ENCODE measurements at regions of chr1 and their contacts with region 1.

Region 1: GRCh38 chr1:25997828-25998761 is at the start of gene PAFAH2:
- DNase-seq: peak; percentile 98
- H3K4me3 Mint-ChIP-seq: peak within 1 kb of the TSS; percentile 96
- H3K27ac Mint-ChIP-seq: peak within 1 kb of the TSS; percentile 96
- H3K4me1 Mint-ChIP-seq: peaks cover 19% of the 10 kb centered on the region
- H3K27me3 Mint-ChIP-seq: no peaks in the 10 kb centered on the region
- total RNA-seq, gene PAFAH2: 5.9 to 7.3 TPM

Region 2: DNA sequence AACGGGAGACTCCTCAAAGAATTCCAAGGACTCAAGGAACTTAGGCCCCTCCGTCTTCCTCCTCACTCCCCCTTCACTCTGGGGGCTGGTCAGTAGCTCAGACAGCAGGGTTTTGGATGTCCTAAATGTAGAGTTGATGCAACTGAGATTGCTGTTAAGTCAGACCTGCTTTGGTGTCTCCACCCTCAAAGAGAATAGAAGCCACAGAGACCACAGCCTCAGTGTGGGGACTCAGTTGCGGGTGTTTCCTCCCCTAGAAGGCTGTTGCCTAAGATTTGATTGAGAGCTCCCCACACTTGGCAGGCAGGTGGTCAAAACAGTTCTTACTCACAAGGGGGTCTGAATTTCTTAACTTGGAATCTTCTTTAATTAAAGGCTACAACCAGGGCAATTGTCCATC is 373.9 kb before region 1 on chr1:
- CTCF ChIA-PET with region 1: no interaction called
- POLR2A ChIA-PET with region 1: no interaction called
- intact Hi-C with region 1: loop called (anchors 10 kb)
- DNase-seq: peak; percentile 55
- H3K4me3 Mint-ChIP-seq: no peak overlapping the region
- H3K27ac Mint-ChIP-seq: no peak overlapping the region
- H3K4me1 Mint-ChIP-seq: peaks cover 65% of the 10 kb centered on the region
- H3K27me3 Mint-ChIP-seq: peaks cover 4% of the 10 kb centered on the region

Region 3: GRCh38 chr1:25819576-25820246 is 178.4 kb before region 1 on chr1 and contains the start of gene MTFR1L:
- CTCF ChIA-PET with region 1: interaction called, 7 read pairs
- POLR2A ChIA-PET with region 1: interaction called, 5 read pairs
- intact Hi-C with region 1: loop called (anchors 1 kb)
- DNase-seq: peak; percentile 97
- H3K4me3 Mint-ChIP-seq: peak within 1 kb of the TSS; percentile 95
- H3K27ac Mint-ChIP-seq: peak within 1 kb of the TSS; percentile 89
- H3K4me1 Mint-ChIP-seq: peaks cover 33% of the 10 kb centered on the region
- H3K27me3 Mint-ChIP-seq: no peaks in the 10 kb centered on the region
- total RNA-seq, gene MTFR1L: 28.0 to 31.1 TPM

Region 4: DNA sequence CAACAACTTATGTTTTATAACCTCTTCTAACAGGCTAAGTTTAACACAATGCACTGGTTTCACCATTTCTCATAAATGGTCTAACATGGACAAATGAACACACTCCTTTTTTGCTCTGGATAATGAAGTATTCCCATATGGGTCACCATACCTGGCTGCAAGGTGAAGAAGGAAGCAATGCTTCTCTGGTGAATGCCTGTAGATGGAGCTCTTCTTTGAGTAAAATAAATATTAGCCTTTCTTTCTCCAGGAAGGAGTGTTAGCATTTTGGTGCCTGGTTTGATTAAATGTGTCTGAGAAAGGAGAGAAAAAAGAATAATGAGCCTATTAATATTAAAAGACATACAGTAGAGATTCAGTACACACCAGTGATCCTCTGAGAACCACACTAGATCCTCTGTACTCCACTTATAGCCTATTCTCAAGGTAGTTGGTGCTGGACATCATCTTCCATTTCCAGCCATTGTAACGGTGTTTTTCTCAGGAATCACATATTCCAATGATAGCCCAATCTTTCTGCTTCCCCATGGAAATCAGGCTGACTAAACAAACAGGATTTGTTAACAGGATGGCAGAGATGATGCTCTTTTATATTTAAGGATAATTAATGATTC is 160.7 kb before region 1 on chr1:
- CTCF ChIA-PET with region 1: no interaction called
- POLR2A ChIA-PET with region 1: no interaction called
- intact Hi-C with region 1: no loop called
- DNase-seq: no peak
- H3K4me3 Mint-ChIP-seq: no peak overlapping the region
- H3K27ac Mint-ChIP-seq: no peak overlapping the region
- H3K4me1 Mint-ChIP-seq: no peaks in the 10 kb centered on the region
- H3K27me3 Mint-ChIP-seq: no peaks in the 10 kb centered on the region

Region 5: DNA sequence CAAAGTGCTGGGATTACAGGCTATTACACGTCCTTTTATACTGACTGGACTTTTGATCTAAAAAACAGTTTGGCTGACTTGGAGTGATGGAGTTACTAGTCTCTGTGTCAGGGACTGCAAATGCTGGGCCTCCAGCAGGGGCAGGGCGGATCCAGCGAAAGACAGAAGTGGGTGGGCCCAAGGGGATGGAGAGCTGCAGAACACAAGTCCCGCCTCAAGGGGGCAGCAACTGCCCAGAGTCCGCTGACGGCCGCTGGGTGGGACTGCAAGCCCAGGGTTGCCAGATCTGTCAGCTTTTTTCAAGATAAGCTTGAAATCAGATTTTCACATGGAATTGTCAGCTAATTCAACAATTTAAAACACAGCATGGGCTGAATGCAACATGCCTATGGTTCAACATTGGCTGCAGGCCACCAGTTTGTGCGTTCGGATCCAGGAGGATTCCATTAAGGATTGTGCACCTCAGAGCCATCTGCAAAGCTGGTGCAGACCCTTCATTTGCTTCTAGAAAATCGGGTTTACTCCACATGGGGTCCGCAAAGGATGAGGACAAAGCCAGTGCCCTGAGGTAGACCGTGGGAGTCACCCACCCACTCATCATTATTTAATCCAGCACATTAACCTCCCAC is 102.6 kb before region 1 on chr1:
- CTCF ChIA-PET with region 1: interaction called, 260 read pairs
- POLR2A ChIA-PET with region 1: interaction called, 20 read pairs
- intact Hi-C with region 1: loop called (anchors 1 kb)
- DNase-seq: peak; percentile 93
- H3K4me3 Mint-ChIP-seq: no peak overlapping the region
- H3K27ac Mint-ChIP-seq: no peak overlapping the region
- H3K4me1 Mint-ChIP-seq: peaks cover 12% of the 10 kb centered on the region
- H3K27me3 Mint-ChIP-seq: no peaks in the 10 kb centered on the region

Region 6: DNA sequence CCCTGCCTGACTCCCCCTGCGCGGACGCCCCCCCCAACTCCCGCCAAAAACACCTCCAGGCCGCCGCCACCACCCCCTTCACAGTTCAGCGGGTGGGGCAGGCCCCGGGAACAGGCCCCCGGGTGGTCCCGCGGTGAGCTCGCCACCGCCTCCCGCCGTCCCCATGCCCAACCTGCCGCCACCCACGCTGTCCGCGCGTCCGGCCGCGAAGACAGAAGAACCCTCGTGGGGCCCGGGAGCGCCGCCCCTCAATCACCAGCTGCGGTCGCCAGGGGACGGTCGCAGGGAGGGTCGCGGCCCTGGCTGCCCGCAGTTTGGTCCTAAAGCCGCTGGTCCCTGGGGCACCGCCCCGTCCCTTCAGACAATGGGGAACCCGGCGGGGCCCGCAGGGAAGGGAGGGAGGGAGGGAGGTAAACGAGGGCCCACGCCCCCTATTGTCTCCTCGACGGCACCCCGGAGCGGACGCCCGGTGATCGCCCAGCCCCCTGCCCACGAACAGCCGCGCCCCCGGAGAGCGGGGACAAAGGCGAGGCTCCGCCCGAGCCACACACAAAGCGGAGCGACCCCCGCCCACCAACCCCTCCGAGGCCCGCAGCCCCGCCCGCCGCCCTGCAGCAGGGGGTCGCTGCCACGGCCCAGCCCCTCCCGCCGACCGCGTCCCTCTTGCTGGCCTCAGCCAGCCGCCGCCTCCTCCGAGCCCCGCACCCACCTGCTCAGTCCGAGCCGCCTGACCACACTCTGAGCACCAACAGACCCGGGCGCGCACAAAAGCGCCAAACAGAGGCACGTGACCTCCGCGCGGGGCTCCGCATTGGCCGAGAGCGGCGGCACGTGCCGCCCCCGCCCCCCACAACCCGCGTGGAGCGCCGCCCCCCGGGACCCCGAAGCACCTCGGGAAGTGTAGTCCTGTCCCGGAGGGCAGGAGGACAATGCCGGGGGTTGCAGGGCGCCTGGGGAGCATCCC is 92.1 kb before region 1 on chr1 and contains the start of gene STMN1:
- CTCF ChIA-PET with region 1: interaction called, 45 read pairs
- POLR2A ChIA-PET with region 1: interaction called, 9 read pairs
- intact Hi-C with region 1: loop called (anchors 1 kb)
- DNase-seq: peak; percentile 95
- H3K4me3 Mint-ChIP-seq: peak within 1 kb of the TSS; percentile 84
- H3K27ac Mint-ChIP-seq: peak within 1 kb of the TSS; percentile 89
- H3K4me1 Mint-ChIP-seq: peaks cover 23% of the 10 kb centered on the region
- H3K27me3 Mint-ChIP-seq: no peaks in the 10 kb centered on the region
- total RNA-seq, gene STMN1: 619 to 630 TPM

Region 7: GRCh38 chr1:25971066-25971810 is 26.9 kb before region 1 on chr1:
- CTCF ChIA-PET with region 1: interaction called, 3 read pairs
- POLR2A ChIA-PET with region 1: interaction called, 9 read pairs
- intact Hi-C with region 1: loop called (anchors 1 kb)
- DNase-seq: peak; percentile 29
- H3K4me3 Mint-ChIP-seq: peak overlapping the region; percentile 4
- H3K27ac Mint-ChIP-seq: peak overlapping the region; percentile 90
- H3K4me1 Mint-ChIP-seq: peaks cover 22% of the 10 kb centered on the region
- H3K27me3 Mint-ChIP-seq: no peaks in the 10 kb centered on the region

Region 8: GRCh38 chr1:26035959-26036755 is 38.1 kb after region 1 on chr1:
- CTCF ChIA-PET with region 1: interaction called, 7 read pairs
- POLR2A ChIA-PET with region 1: no interaction called
- intact Hi-C with region 1: loop called (anchors 2 kb)
- DNase-seq: peak; percentile 84
- H3K4me3 Mint-ChIP-seq: peak overlapping the region; percentile 91
- H3K27ac Mint-ChIP-seq: no peak overlapping the region
- H3K4me1 Mint-ChIP-seq: peaks cover 11% of the 10 kb centered on the region
- H3K27me3 Mint-ChIP-seq: peaks cover 5% of the 10 kb centered on the region

Measured in activated CD4-positive, alpha-beta memory T cell treated with anti-CD3 and anti-CD28 coated beads for 36 hours (primary cell).